HCT116 (cell line): ENCODE measurements at regions of chr10 and their contacts with region 1.

Region 1: DNA sequence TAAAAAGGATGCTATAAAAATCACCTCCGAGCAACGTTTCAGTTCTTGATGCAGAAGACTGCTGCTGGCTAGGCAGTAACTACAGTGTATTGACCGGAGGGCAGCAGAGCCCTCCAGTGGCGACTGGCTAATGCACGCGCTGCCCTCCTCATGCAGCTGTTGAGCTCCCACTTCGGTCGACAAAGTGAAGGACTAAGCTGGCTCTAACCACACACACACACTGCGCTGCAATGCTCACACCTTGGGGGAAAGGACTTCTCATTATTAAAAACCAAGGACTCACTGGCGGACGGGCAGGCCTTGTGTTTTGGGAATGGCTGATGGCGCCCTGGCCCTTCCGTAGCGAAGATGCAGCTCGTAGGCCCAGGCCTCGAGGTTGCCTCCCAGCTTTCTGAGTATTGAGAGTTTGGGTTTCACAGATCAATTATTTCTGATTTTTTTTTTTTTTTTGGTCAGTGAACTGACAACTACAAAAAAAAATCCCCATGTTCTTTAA is 120.9 kb upstream of the DIP2C start:
- DNase-seq: no peak
- ATAC-seq: peak; percentile 67; the same call in 1 of the 2 replicates
- H3K4me3 ChIP-seq: no peak overlapping the region
- H3K27ac ChIP-seq: no peak overlapping the region
- H3K4me1 ChIP-seq: no peaks in the 10 kb centered on the region
- H3K27me3 ChIP-seq: no peaks in the 10 kb centered on the region
- CTCF ChIP-seq: peak in 2 of 3 experiments; percentile 21 to 26; a peak in 4 of 6 replicates
- POLR2A ChIP-seq: no peak
- RAD21 ChIP-seq: peak; percentile 53

Region 2: DNA sequence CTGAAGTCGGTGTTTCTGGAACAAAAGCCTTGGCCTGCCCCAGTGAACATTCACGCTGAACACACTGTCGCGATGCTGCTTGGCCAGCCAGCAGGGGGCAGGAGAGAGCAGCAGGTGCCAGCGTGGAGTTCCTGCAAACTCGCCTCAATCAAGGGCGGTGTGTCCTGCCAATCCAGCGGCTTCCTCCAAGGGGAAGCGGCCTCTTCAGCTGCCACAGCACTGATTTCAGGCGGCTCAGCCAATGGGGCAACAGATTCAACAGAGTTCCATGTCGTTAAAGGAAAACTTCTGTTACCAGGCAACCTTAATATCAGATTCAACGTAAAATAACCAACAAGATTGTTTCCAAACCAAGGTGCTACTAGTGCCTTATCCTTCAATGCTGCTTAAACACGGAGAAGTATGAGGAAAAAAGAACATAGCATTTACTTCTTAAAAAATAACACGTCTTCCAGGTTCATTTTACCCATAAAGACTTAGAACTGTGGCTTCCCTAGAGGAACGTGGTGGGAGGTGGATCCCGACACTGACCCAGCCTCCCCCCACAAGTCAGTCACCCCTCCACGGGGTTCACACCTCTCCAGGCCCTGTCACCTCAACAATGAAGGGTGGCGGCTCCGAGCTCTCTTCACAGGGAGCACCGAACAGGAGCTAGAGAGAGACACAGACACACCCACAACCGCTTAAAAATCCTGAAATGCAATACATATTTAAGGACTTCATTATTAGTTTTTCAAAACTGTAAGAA is 299.1 kb before region 1 on chr10:
- CTCF ChIA-PET with region 1: no interaction called
- POLR2A ChIA-PET with region 1: no interaction called
- RAD21 ChIA-PET with region 1: no interaction called
- intact Hi-C with region 1: loop called (anchors 1 kb)
- DNase-seq: peak; percentile 83
- ATAC-seq: peak; percentile 97
- H3K4me3 ChIP-seq: no peak overlapping the region
- H3K27ac ChIP-seq: no peak overlapping the region
- H3K4me1 ChIP-seq: peaks cover 0 to 10% of the 10 kb centered on the region in 2 experiments; a peak in 2 of 4 replicates
- H3K27me3 ChIP-seq: no peaks in the 10 kb centered on the region
- CTCF ChIP-seq: peak; percentile 78 to 99 (median 98)
- POLR2A ChIP-seq: no peak
- RAD21 ChIP-seq: peak; percentile 90